Calu3 (cell line): ENCODE measurements at regions of chr1 and their contacts with region 1.

Region 1: GRCh38 chr1:24319312-24319863 is at the start of gene GRHL3:
- DNase-seq: peak; percentile 62
- H3K4me3 Mint-ChIP-seq: peak within 1 kb of the TSS; percentile 79
- H3K27ac Mint-ChIP-seq: peak within 1 kb of the TSS; percentile 66
- H3K4me1 Mint-ChIP-seq: peaks cover 31% of the 10 kb centered on the region
- H3K27me3 Mint-ChIP-seq: no peaks in the 10 kb centered on the region
- CTCF ChIP-seq: no peak
- total RNA-seq, gene GRHL3: 1.4 and 2.9 TPM in 2 replicates

Region 2: GRCh38 chr1:24391882-24392603 is 72.7 kb after region 1 on chr1:
- CTCF ChIA-PET with region 1: interaction called, 5 read pairs
- intact Hi-C with region 1: loop called (anchors 5 kb)
- DNase-seq: peak; percentile 63
- H3K4me3 Mint-ChIP-seq: no peak overlapping the region
- H3K27ac Mint-ChIP-seq: peak overlapping the region; percentile 54
- H3K4me1 Mint-ChIP-seq: peaks cover 45% of the 10 kb centered on the region
- H3K27me3 Mint-ChIP-seq: no peaks in the 10 kb centered on the region
- CTCF ChIP-seq: peak; percentile 52